ENCODE measurements at regions of chr4 and their contacts with region 1.

Region 1: DNA sequence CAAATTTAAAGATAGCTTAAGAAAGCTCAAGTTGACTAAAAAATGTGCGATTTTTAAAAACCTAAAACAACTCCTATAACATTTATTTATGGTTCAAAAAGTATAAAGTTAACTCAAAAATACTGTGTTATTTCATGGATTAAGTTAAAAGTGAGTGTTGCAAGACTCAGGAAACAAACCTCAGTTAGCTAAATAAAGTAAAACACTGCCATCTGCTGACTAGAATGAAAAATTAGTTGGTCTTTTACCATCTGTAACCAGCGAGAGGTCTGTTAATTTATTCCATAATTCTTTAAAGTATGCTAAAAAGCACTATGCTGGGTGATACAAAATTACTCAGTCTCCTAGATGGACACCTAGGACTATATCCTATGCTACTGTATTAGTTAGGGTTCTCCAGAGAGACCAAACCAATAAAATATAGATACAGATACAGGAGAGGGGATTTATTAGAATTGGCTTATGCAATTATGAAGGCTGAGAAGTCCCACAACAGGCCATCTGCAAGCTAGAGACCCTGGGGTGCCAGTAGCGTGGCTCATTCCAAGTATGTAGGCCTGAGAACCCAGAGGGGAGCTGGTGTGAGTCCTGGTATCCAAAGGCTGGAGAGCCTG is 4.9 kb upstream of the WDFY3 start:
- DNase-seq: no peak
- H3K4me3 ChIP-seq: no peak overlapping the region
- H3K27ac ChIP-seq: no peak overlapping the region
- H3K4me1 ChIP-seq: peaks cover 0 to 35% (median 6%) of the 10 kb centered on the region in 6 donors
- H3K27me3 ChIP-seq: peaks cover 0 to 14% (median 0%) of the 10 kb centered on the region in 7 donors
- CTCF ChIP-seq: peak in 8 of 11 experiments; percentile 38 to 62 (median 50)
- POLR2A ChIP-seq: no peak

Region 2: GRCh38 chr4:84750253-84750959 is 221.0 kb before region 1 on chr4:
- intact Hi-C with region 1: loop called (anchors 5 kb)
- DNase-seq: no peak
- H3K4me3 ChIP-seq: no peak overlapping the region
- H3K27ac ChIP-seq: peak overlapping the region in 2 of 8 donors; percentile 88 to 89
- H3K4me1 ChIP-seq: peaks cover 7 to 40% (median 18%) of the 10 kb centered on the region in 6 donors
- H3K27me3 ChIP-seq: no peaks in the 10 kb centered on the region
- CTCF ChIP-seq: peak in 9 of 11 experiments; percentile 29 to 61 (median 51)
- POLR2A ChIP-seq: no peak

Measured in spleen (tissue), 13 donors.